ENCODE measurements at regions of chr7 and their contacts with region 1.

Region 1: DNA sequence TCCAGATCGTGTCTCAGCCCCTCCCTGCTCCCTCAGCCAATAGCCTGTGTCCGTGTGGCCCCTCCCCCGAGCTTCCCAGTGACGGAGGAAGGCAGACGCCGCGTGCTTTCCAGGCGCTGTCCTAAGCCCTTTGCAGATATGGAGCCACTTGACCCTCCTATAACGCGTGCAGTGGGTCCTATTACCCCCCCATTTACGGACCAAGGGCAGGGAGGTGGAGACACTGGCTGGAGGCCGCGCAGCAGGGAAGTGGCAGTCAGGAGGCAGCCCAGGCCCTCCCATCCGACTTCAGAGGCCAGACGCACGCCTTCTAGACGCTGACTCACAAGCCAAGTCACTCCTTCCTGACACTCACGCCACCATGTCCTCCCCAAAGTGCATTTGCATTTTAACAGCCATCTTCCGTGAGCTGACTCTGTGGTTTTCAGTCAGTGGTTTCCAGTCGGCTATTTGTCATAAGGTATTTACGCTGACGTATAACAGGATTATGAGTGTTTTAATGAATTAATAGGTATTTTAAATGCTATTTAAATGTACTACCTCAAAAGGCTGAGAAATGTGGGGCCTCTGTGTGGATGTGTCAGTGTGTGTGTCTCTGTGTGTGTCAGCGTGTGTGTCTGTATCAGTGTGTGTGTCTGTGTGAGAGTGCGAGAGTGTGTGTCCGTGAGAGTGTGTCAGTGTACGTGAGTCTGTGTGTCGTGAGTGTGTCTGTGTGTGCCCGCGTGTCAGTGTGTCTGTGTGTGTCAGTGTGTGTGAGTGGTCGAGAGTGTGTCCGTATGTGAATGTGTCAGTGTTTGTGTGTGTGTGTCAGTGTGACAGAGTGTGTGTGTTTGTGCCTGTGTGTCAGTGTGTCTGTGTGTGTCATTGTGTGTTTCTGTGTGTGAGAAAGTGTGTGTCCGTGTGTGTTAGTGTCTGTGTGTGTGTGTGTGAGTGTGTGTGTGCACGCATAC is 92.0 kb upstream of the INSIG1 start:
- DNase-seq: peak; percentile 92
- ATAC-seq: peak; percentile 90

Region 2: GRCh38 chr7:155257482-155258225 is 52.0 kb after region 1 on chr7:
- intact Hi-C with region 1: loop called in 1 of 2 experiments (anchors 5 kb)
- DNase-seq: peak; percentile 84
- ATAC-seq: peak; percentile 86 to 89

Region 3: DNA sequence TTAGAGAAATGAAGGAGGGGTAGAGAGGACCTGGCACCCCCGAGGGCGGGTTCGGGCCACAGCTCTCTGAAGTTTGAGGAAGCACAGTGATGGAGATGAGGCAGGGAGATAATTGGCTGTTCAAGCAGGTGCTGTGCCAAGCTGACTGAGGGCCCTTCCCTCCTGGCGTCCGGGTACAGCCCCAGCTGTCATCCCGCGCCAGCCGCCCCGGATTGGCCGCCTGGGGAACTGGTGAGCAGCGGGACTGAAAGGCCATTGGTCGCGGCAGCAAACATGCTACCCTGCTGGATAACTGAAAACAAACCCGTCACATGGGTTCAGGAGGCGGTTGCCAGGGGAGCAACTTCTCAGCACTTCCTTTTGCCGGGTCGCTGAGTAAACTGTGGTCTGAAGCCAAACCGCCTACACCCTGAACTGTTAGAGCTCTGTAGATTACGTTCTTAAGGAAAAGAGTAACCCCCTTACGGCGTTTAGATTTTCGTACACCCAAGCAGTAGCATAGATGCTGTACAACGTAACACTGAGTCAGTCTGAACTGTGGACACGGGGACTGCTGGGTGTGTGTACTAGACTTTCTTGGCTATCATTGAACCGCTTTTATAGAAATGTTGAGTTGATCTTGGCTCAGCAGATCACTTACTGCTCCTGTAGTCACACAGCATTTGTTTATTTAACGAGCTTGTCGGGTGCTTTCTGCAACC is 93.3 kb after region 1 on chr7:
- intact Hi-C with region 1: loop called in 1 of 2 experiments (anchors 5 kb)
- DNase-seq: peak; percentile 95
- ATAC-seq: peak; percentile 76 to 88

Region 4: DNA sequence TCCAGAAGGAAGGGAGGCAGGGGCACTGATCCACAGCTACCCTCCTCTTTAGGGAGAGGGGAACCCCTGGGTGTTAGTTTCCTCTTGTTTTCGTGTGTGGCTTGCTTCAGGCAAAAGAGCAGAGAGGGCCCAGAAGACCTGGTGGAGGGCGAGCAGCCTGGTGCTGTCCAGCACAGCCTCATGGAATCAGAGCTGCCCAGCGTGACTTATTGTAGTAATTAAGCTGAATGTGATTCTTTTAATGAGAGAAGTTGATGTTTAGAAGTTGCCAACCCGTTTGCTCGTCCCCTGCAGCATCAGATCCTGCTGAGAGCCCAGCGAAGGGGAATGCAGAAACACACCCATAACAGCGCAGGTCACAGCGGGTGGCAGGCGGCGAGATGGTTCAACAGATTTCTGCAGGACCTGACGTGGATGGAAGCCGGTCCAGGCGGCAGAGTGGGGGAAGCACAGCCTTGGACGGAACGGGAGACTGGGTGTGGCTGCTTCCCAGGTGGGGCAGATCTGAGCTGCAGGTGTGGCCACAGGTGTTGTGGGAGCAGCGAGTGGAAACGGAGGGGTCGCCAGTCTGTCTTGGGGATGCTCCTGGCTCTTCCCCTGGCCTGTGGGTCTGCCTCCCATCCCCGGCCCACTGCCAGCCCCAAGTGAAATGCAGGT is 660.4 kb after region 1 on chr7:
- intact Hi-C with region 1: no loop called
- DNase-seq: no peak
- ATAC-seq: no peak